Aorta (tissue), 5 donors: ENCODE measurements at regions of chr10 and their contacts with region 1.

Region 1: DNA sequence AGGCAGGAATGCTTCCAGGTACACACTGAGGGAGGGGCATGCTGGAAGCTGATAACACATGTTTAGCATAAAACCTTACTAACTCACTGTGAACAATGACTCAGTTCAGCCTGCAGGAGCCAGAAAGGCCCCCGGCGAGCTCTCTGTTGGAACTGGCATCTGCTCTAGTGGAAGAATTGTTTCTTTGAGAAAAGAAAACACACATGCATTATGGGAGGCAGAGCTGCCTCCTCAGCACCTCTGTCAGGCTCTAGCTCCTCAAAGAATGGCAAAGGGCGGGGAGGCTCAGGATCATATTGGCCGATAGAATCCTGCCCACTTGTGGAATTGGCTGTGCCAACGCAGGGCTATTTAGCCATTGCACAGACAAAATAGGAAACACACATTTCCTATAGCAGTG is 338.3 kb downstream of the CXCL12 start:
- DNase-seq: no peak
- ATAC-seq: peak; percentile 37
- H3K4me3 ChIP-seq: no peak overlapping the region
- H3K27ac ChIP-seq: peak overlapping the region in 1 of 2 donors; percentile 32
- H3K4me1 ChIP-seq: peaks cover 0 to 2% of the 10 kb centered on the region in 2 donors
- H3K27me3 ChIP-seq: no peaks in the 10 kb centered on the region

Region 2: DNA sequence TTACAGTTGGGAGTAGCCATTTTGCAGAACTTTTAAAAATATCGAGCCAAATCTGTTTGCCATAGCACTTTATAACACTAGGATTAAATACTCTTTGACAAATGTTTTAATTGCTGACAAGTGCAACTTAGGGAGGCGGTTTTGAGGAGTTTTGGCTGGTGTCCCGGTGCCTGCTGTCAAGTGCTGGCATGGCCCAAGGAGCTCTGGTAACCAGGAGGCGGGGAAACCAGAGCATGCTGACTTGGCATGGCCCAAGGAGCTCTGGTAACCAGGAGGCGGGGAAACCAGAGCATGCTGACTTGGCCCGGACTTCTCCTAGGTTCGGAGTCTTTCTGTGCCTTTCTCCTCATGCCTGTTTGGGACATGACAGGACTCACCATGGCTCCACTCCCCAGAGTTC is 367.1 kb before region 1 on chr10:
- intact Hi-C with region 1: loop called in 1 of 2 experiments (anchors 5 kb)
- DNase-seq: peak; percentile 86 to 90
- ATAC-seq: peak; percentile 63
- H3K4me3 ChIP-seq: no peak overlapping the region
- H3K27ac ChIP-seq: no peak overlapping the region
- H3K4me1 ChIP-seq: no peaks in the 10 kb centered on the region
- H3K27me3 ChIP-seq: no peaks in the 10 kb centered on the region

Region 3: DNA sequence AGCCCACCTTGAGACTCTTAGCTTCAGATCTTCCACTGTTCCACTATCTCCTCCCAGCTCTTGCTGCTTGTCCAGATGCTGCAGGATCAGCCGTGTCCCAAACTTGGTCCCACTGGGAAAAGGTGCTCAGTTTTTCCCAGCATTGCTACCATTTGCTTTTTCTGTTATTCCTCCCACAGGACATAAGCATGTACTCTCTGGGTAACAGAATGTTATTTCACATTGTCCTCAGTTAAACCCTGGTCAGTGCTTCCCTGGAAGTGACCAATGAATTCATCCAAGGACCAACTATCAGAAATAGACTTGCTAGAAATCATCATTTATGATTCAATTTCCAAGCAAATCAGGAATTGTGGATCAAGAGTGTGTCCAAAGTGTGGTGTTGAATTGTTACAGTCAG is 218.8 kb before region 1 on chr10:
- intact Hi-C with region 1: no loop called
- DNase-seq: no peak
- ATAC-seq: no peak
- H3K4me3 ChIP-seq: no peak overlapping the region
- H3K27ac ChIP-seq: peak overlapping the region in 1 of 2 donors; percentile 67
- H3K4me1 ChIP-seq: no peaks in the 10 kb centered on the region
- H3K27me3 ChIP-seq: no peaks in the 10 kb centered on the region